ENCODE measurements at regions of chr19 and their contacts with region 1.

Region 1: GRCh38 chr19:47514869-47515588 is at the start of gene NAPA:
- DNase-seq: peak; percentile 99
- ATAC-seq: peak; percentile 92
- H3K4me3 Mint-ChIP-seq: peak within 1 kb of the TSS; percentile 97
- H3K27ac Mint-ChIP-seq: peak within 1 kb of the TSS; percentile 92
- H3K4me1 Mint-ChIP-seq: peaks cover 83% of the 10 kb centered on the region
- H3K27me3 Mint-ChIP-seq: no peaks in the 10 kb centered on the region
- CTCF ChIP-seq: no peak
- total RNA-seq, gene NAPA: 56.8 and 70.6 TPM in 2 replicates

Region 2: DNA sequence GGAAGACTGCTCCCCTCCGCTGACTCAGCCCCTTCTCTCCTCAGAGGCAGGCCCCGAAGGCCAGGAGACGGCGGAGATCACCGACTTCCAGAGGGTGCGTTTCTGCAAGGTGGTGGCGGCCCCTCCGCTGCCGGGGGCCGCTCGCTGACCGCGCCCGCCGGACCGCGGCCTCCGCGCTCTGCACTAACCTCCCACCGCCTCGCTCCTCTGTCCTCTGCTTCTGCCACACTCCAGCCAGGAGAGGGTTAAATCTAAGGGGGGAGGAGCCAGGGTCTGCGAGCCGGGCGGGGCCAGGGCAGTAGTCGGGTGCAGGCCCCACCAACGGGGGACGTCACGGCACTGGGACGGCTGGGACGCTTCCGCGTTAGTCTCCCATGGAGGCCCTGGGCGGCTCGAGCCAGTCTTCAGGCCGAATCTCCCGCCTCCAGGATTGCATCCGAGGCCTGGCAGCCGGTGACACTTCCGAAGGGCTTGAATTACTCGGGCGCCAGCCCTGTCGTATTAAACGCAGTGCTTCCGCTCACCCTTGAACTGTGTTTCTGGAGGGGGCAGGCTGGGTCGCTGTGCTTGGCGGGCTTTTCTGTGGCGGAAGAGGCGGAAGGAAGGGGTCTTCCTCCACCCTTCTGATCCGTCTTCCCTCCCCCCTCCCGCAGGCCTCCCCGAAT is 241.6 kb before region 1 on chr19:
- CTCF ChIA-PET with region 1: no interaction called
- POLR2A ChIA-PET with region 1: no interaction called
- intact Hi-C with region 1: loop called (anchors 5 kb)
- DNase-seq: peak; percentile 83
- ATAC-seq: peak; percentile 54
- H3K4me3 Mint-ChIP-seq: peak overlapping the region; percentile 96
- H3K27ac Mint-ChIP-seq: peak overlapping the region; percentile 97
- H3K4me1 Mint-ChIP-seq: peaks cover 27% of the 10 kb centered on the region
- H3K27me3 Mint-ChIP-seq: no peaks in the 10 kb centered on the region
- CTCF ChIP-seq: no peak

Region 3: GRCh38 chr19:47436712-47437401 is 78.2 kb before region 1 on chr19:
- CTCF ChIA-PET with region 1: interaction called, 10 read pairs
- POLR2A ChIA-PET with region 1: no interaction called
- intact Hi-C with region 1: loop called (anchors 1 kb)
- DNase-seq: peak; percentile 71
- ATAC-seq: peak; percentile 93
- H3K4me3 Mint-ChIP-seq: no peak overlapping the region
- H3K27ac Mint-ChIP-seq: no peak overlapping the region
- H3K4me1 Mint-ChIP-seq: peaks cover 7% of the 10 kb centered on the region
- H3K27me3 Mint-ChIP-seq: peaks cover 68% of the 10 kb centered on the region
- CTCF ChIP-seq: no peak

Region 4: GRCh38 chr19:47600246-47601179 is 85.5 kb after region 1 on chr19:
- CTCF ChIA-PET with region 1: interaction called, 3 read pairs
- POLR2A ChIA-PET with region 1: interaction called, 14 read pairs
- intact Hi-C with region 1: loop called (anchors 1 kb)
- DNase-seq: peak; percentile 92
- ATAC-seq: peak; percentile 97
- H3K4me3 Mint-ChIP-seq: peak overlapping the region; percentile 84
- H3K27ac Mint-ChIP-seq: peak overlapping the region; percentile 76
- H3K4me1 Mint-ChIP-seq: peaks cover 10% of the 10 kb centered on the region
- H3K27me3 Mint-ChIP-seq: peaks cover 9% of the 10 kb centered on the region
- CTCF ChIP-seq: no peak

Region 5: DNA sequence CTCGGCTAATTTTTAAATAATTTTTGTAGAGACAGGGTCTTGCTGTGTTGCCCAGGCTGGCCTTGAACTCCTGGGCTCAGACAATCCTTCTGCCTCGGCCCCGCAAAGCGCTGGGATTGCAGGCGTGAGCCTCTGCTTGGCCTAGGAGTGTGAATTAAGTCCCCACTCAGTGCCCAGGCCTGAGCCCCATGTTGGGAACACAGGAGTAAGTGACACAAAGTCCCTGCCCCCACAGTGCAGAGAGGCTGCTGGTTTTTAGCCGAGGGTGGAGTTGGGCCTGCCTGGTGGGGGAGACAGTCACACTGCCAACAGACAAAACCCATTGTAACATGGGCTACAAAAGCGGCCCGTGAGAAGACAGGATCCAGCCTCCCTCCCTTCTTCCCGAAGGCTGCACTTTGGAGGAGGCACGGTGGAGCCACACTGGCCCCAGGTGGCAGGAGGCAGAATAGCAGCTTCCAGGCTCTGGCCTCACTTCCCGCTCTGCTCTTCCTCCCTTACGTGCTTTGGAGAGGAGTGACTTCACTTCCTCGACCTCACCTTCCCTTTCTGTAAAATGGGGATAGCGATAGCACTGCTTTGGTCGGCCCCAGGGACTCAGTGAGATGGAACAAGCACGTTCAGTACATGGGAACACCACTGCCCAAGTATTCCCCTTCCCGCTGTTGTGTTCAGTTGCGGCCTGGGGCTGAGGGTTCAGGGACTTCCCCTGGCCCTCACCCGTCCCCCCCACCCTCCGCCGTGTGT is 183.0 kb after region 1 on chr19:
- CTCF ChIA-PET with region 1: no interaction called
- POLR2A ChIA-PET with region 1: no interaction called
- intact Hi-C with region 1: loop called (anchors 1 kb)
- DNase-seq: peak; percentile 37
- ATAC-seq: peak; percentile 71
- H3K4me3 Mint-ChIP-seq: no peak overlapping the region
- H3K27ac Mint-ChIP-seq: no peak overlapping the region
- H3K4me1 Mint-ChIP-seq: no peaks in the 10 kb centered on the region
- H3K27me3 Mint-ChIP-seq: no peaks in the 10 kb centered on the region
- CTCF ChIP-seq: no peak

Measured in activated B cell treated with CpG ODN at 0.5 μM for 24 hours (primary cell).